GM12878 (cell line): ENCODE measurements at regions of chr3 and their contacts with region 1.

Region 1: DNA sequence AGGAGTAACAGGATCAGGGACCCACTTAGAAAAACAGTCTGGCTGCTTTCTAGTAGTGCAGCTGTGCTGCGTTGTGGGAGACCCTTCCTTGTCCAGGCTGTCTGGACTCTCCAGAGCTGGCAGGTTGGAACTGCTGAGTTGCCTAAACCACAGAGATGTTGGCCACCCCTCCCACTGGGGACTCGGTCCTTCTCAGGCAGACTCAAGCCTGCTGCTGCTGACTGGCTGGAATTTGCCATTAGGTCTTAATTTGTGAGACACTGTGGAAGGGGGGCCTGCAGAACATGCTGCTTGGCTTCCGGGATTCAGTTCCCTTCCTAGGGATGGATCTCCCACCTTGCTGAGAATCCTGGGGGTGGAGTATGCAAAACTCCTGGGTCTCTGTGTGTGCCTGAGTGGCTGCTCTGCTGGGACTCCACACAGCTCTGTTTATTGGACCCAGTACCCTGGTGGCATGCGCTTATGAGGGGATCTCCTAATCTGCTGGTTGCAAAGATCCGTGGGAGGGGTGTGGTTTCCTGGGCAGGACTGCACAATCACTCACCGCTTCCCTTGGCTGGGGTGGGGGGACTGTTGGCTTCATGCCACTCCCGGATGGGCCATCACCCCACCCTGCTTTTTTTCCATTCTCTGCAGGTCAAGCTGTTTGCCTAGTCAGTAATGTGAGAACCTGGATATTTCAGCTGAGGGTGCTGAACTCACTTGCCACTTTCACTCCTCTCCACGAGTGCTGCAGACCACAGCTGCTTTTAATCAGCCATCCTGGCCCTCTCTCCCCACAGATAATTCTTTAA is 150.5 kb downstream of the CFAP20DC start:
- DNase-seq: peak; percentile 63
- ATAC-seq: peak; percentile 95
- H3K4me3 ChIP-seq: no peak overlapping the region
- H3K27ac ChIP-seq: no peak overlapping the region
- H3K4me1 ChIP-seq: peaks cover 8% of the 10 kb centered on the region; the same call in 1 of the 2 replicates
- H3K27me3 ChIP-seq: no peaks in the 10 kb centered on the region
- CTCF ChIP-seq: no peak
- EP300 ChIP-seq: peak; percentile 23 to 52; a peak in 2 of 4 replicates
- POLR2A ChIP-seq: no peak
- RAD21 ChIP-seq: no peak

Region 2: DNA sequence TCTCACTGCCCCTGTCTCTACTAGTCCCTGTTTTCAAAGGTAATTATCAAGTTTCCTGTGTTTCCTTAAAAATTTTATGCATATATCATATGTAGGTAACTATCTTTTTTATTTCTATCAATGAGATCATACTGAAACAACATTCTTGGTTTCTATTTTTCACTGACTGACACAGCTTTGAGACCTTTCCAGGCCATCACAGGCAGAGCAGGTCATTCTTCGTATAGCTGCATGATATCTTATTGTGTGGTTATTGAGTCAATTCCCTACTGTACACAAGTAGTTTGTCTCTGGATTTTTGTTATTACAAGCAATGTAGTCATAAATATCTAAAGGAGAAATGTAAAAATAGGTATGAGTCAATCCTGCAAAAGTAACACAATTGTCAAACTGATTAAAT is 19.2 kb before region 1 on chr3:
- CTCF ChIA-PET with region 1: interaction called, 3 read pairs
- POLR2A ChIA-PET with region 1: interaction called, 5 read pairs
- RAD21 ChIA-PET with region 1: interaction called, 3 read pairs
- SMC1A ChIA-PET with region 1: interaction called, 24 read pairs
- in situ Hi-C with region 1: no loop called
- intact Hi-C with region 1: no loop called
- DNase-seq: no peak
- ATAC-seq: peak; percentile 94
- H3K4me3 ChIP-seq: no peak overlapping the region
- H3K27ac ChIP-seq: no peak overlapping the region
- H3K4me1 ChIP-seq: no peaks in the 10 kb centered on the region
- H3K27me3 ChIP-seq: no peaks in the 10 kb centered on the region
- CTCF ChIP-seq: no peak
- EP300 ChIP-seq: no peak
- POLR2A ChIP-seq: no peak
- RAD21 ChIP-seq: no peak

Region 3: GRCh38 chr3:58952128-58952917 is 53.0 kb after region 1 on chr3:
- CTCF ChIA-PET with region 1: interaction called, 5 read pairs
- POLR2A ChIA-PET with region 1: interaction called, 3 read pairs
- RAD21 ChIA-PET with region 1: interaction called, 15 read pairs
- SMC1A ChIA-PET with region 1: interaction called, 18 read pairs
- in situ Hi-C with region 1: no loop called
- intact Hi-C with region 1: loop called (anchors 5 kb)
- DNase-seq: peak; percentile 17
- ATAC-seq: peak; percentile 92
- H3K4me3 ChIP-seq: no peak overlapping the region
- H3K27ac ChIP-seq: no peak overlapping the region
- H3K4me1 ChIP-seq: no peaks in the 10 kb centered on the region
- H3K27me3 ChIP-seq: no peaks in the 10 kb centered on the region
- CTCF ChIP-seq: no peak
- EP300 ChIP-seq: no peak
- POLR2A ChIP-seq: no peak
- RAD21 ChIP-seq: no peak